ENCODE measurements at regions of chr17 and their contacts with region 1.

Region 1: GRCh38 chr17:45428050-45428617 is 4.5 kb downstream of the ARHGAP27 start:
- DNase-seq: peak; percentile 70 to 90
- H3K4me3 ChIP-seq: 0 out of 2 replicates have a peak overlapping the region, but pooled peaks have one; percentile 15
- H3K4me3 Mint-ChIP-seq: peak overlapping the region; percentile 58
- H3K27ac Mint-ChIP-seq: peak overlapping the region; percentile 57
- H3K4me1 ChIP-seq: 0 out of 2 replicates have a peak, but pooled peaks cover 7% of the 10 kb centered on the region
- H3K4me1 Mint-ChIP-seq: peaks cover 22% of the 10 kb centered on the region
- H3K27me3 ChIP-seq: no peaks in the 10 kb centered on the region
- H3K27me3 Mint-ChIP-seq: no peaks in the 10 kb centered on the region
- CTCF ChIP-seq: peak; percentile 93 to 99

Region 2: GRCh38 chr17:45218895-45219661 is 209.1 kb before region 1 on chr17:
- CTCF ChIA-PET with region 1: interaction called, 13 read pairs
- POLR2A ChIA-PET with region 1: no interaction called
- intact Hi-C with region 1: no loop called
- DNase-seq: peak; percentile 86 to 92
- H3K4me3 ChIP-seq: no peak overlapping the region
- H3K4me3 Mint-ChIP-seq: no peak overlapping the region
- H3K27ac Mint-ChIP-seq: no peak overlapping the region
- H3K4me1 ChIP-seq: peaks cover 5% of the 10 kb centered on the region; the same call in 1 of the 2 replicates
- H3K4me1 Mint-ChIP-seq: no peaks in the 10 kb centered on the region
- H3K27me3 ChIP-seq: peaks cover 1% of the 10 kb centered on the region; the same call in 1 of the 2 replicates
- H3K27me3 Mint-ChIP-seq: peaks cover 17% of the 10 kb centered on the region
- CTCF ChIP-seq: peak; percentile 88 to 97

Region 3: DNA sequence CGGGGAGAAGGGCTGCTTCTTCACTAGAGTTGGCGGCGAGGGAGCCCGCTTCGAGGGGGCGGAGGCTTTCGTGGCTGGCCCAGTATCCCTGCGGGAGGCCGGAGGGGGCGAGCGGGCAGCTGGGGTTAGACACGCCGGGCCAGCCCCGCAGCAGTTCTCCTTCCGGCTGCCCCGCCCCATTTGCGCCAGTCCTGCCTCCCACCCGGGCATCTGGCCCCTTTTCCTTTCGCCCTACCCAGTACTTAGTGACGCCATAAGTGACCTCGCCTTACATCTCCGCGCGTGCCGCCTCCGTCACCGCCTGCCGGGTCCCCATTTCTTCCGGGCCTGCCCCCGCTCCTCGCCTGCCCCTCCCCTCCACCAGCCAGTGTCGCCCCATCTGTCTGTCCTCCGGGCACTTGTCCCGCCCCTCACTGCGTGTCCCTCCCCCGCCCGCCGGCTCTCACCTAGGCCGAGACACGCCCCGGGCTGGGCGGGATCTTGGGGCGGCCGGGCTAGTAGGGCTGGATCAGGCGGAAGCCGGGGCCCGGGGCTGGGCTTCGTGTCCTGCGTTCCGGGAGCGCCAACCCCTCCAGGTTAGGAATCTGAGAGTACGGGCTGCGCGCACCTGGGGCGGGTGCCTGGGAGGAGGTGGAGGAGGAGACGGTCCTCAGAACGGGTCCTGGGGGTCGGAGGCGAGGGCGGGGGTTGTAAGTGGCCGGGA is 180.6 kb before region 1 on chr17:
- CTCF ChIA-PET with region 1: interaction called, 5 read pairs
- POLR2A ChIA-PET with region 1: no interaction called
- intact Hi-C with region 1: loop called (anchors 2 kb)
- DNase-seq: peak; percentile 99
- H3K4me3 ChIP-seq: peak overlapping the region; percentile 63
- H3K4me3 Mint-ChIP-seq: peak overlapping the region; percentile 81
- H3K27ac Mint-ChIP-seq: peak overlapping the region; percentile 92
- H3K4me1 ChIP-seq: peaks cover 11% of the 10 kb centered on the region
- H3K4me1 Mint-ChIP-seq: peaks cover 10% of the 10 kb centered on the region
- H3K27me3 ChIP-seq: no peaks in the 10 kb centered on the region
- H3K27me3 Mint-ChIP-seq: peaks cover 2% of the 10 kb centered on the region
- CTCF ChIP-seq: no peak

Region 4: GRCh38 chr17:45317112-45317928 is 110.8 kb before region 1 on chr17:
- CTCF ChIA-PET with region 1: interaction called, 18 read pairs
- POLR2A ChIA-PET with region 1: interaction called, 16 read pairs
- intact Hi-C with region 1: no loop called
- DNase-seq: peak; percentile 100
- H3K4me3 ChIP-seq: peak overlapping the region; percentile 63
- H3K4me3 Mint-ChIP-seq: peak overlapping the region; percentile 89
- H3K27ac Mint-ChIP-seq: peak overlapping the region; percentile 96
- H3K4me1 ChIP-seq: peaks cover 31% of the 10 kb centered on the region
- H3K4me1 Mint-ChIP-seq: peaks cover 49% of the 10 kb centered on the region
- H3K27me3 ChIP-seq: no peaks in the 10 kb centered on the region
- H3K27me3 Mint-ChIP-seq: no peaks in the 10 kb centered on the region
- CTCF ChIP-seq: peak in 1 of 2 experiments; percentile 5

Region 5: GRCh38 chr17:45385331-45385997 is 42.7 kb before region 1 on chr17:
- CTCF ChIA-PET with region 1: interaction called, 14 read pairs
- POLR2A ChIA-PET with region 1: no interaction called
- intact Hi-C with region 1: no loop called
- DNase-seq: peak; percentile 87 to 94
- H3K4me3 ChIP-seq: no peak overlapping the region
- H3K4me3 Mint-ChIP-seq: no peak overlapping the region
- H3K27ac Mint-ChIP-seq: peak overlapping the region; percentile 6
- H3K4me1 ChIP-seq: peaks cover 8% of the 10 kb centered on the region; the same call in 1 of the 2 replicates
- H3K4me1 Mint-ChIP-seq: peaks cover 28% of the 10 kb centered on the region
- H3K27me3 ChIP-seq: no peaks in the 10 kb centered on the region
- H3K27me3 Mint-ChIP-seq: peaks cover 3% of the 10 kb centered on the region
- CTCF ChIP-seq: peak; percentile 97 to 98

Region 6: DNA sequence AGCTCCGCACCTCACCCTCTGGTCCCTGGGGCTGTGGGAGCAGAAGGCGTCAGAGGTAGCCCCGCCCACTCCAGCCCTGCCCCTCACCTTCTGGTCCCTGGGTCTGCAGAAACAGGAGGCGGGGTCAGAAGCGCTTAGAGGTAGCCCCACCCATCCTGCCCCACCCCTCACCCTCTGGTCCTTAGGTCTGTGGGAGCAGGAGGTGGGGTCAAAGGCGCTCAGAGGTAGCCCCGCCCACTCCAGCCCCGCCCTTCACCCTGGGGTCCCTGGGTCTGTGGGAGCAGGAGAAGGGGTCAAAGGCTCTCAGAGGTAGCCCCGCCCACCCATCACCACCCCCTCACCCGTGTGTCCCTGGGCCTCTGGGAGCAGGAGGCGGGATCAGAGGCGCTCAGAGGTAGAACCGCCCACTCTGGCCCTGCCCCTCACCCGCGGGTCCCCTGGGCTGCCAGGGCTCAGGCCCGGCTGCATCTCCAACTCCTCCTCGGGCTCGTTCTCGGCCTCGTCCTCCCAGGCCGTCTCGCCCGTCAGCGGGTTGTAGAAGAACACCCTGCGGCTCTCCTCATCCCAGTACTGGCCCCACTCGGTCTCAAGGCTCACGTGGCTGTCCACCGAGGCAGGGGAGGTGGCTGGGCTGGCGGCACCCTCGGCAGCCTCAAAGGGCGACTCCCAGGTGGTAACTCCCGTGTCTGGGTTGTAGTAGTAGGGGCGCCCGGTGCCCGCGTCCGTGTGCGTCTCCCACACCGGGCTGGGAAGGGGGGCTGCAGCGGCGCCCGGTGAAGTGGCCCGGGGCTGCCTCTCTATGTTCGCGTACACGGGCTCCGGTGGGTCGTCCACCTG is 22.7 kb before region 1 on chr17:
- CTCF ChIA-PET with region 1: interaction called, 30 read pairs
- POLR2A ChIA-PET with region 1: interaction called, 4 read pairs
- intact Hi-C with region 1: loop called (anchors 2 kb)
- DNase-seq: peak in 1 of 2 experiments; percentile 76
- H3K4me3 ChIP-seq: no peak overlapping the region
- H3K4me3 Mint-ChIP-seq: no peak overlapping the region
- H3K27ac Mint-ChIP-seq: no peak overlapping the region
- H3K4me1 ChIP-seq: peaks cover 39% of the 10 kb centered on the region
- H3K4me1 Mint-ChIP-seq: peaks cover 14% of the 10 kb centered on the region
- H3K27me3 ChIP-seq: no peaks in the 10 kb centered on the region
- H3K27me3 Mint-ChIP-seq: no peaks in the 10 kb centered on the region
- CTCF ChIP-seq: no peak